Calu3 (cell line): ENCODE measurements at regions of chr19 and their contacts with region 1.

Region 1: DNA sequence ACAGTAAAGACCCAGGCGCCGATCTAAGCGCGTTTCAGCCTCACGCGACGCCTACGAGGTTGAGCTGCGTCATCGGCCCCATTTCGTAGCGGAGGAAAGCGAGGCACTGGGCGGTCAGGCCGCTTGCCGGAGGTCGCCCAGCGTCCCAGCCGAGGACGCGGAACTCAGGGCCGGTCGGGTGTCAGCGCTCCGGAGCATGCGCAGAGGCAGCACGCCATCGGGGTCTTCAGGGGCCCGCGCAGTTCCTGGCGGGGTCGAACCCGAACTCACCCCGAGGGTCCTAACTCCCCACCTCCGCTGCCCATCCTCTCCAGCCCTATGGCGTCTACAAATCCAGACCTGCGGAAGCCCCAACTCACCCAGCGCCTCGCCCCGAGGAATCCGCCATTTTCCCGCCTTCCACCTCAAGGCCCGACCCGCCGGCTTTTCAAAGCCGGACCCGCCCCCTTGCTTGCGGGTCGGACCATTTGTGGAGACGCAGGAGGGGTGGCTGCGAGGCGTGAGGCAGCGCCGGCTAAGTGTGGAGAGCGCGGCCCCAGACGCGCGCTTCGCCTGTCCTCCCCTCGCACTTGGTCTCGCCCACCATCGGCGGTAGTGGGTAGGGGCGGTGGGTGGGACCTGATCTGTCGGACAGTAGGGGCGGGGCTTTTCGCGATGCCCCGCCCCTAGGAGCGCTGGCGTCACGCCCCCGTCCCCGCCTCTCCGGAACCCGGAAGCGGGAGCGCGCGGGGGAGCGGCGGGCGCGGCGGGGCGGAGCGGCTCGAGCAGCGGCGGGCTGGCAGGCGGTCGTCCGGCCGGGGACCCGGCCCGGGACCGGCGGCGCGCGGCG is at the starts of genes HAUS8 and MYO9B:
- DNase-seq: peak; percentile 97
- H3K4me3 Mint-ChIP-seq: peak within 1 kb of the TSS; percentile 78
- H3K27ac Mint-ChIP-seq: peak within 1 kb of the TSS; percentile 33
- H3K4me1 Mint-ChIP-seq: peaks cover 8% of the 10 kb centered on the region
- H3K27me3 Mint-ChIP-seq: no peaks in the 10 kb centered on the region
- CTCF ChIP-seq: no peak
- total RNA-seq, gene HAUS8: 15.7 and 20.5 TPM in 2 replicates
- total RNA-seq, gene MYO9B: 38.4 and 40.4 TPM in 2 replicates

Region 2: GRCh38 chr19:17107525-17108452 is 32.5 kb after region 1 on chr19:
- CTCF ChIA-PET with region 1: no interaction called
- intact Hi-C with region 1: no loop called
- DNase-seq: peak; percentile 81
- H3K4me3 Mint-ChIP-seq: peak overlapping the region; percentile 14
- H3K27ac Mint-ChIP-seq: peak overlapping the region; percentile 75
- H3K4me1 Mint-ChIP-seq: peaks cover 10% of the 10 kb centered on the region
- H3K27me3 Mint-ChIP-seq: no peaks in the 10 kb centered on the region
- CTCF ChIP-seq: no peak

Region 3: DNA sequence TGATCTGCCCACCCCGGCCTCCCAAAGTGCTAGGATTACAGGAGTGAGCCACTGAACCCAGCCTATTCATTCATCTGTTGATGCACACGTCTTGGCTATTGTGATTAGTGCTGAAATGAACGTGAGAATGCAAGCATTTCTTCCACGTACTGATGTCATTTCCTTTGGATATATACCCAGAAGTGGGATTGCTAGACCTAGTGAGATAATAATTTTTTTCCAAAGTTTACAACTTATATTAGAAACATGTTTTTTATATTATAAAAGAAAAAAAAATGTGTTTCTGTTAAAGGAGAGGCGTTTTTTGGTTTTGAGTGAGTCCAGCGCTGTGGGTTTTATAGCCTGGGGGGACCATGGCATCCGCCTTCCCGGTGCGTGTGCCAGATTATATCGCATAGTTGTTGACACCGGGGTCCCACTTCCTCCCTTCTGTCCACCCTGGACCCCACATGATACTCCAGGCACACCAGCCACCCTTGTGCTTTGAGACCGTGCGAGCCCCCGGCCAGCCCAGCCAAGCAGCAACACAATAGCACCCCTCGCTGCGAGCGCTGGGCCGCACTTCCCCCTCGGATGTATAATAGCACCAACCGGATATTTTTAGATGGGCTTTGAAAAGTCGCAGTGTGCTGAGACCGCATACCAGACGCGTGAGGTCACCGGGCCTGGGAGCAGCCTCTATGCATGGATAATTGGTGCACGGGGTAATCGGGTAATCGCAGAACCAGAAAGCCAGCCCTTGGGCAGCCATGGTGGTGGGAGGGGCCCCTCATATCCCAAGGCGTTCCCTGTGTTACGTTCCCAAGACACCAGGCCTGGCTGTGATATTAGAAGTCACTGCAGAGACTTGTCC is 60.0 kb after region 1 on chr19:
- CTCF ChIA-PET with region 1: interaction called, 3 read pairs
- intact Hi-C with region 1: loop called (anchors 2 kb)
- DNase-seq: peak; percentile 83
- H3K4me3 Mint-ChIP-seq: peak overlapping the region; percentile 35
- H3K27ac Mint-ChIP-seq: peak overlapping the region; percentile 50
- H3K4me1 Mint-ChIP-seq: peaks cover 16% of the 10 kb centered on the region
- H3K27me3 Mint-ChIP-seq: no peaks in the 10 kb centered on the region
- CTCF ChIP-seq: no peak